ENCODE measurements at regions of chr18 and their contacts with region 1.

Region 1: DNA sequence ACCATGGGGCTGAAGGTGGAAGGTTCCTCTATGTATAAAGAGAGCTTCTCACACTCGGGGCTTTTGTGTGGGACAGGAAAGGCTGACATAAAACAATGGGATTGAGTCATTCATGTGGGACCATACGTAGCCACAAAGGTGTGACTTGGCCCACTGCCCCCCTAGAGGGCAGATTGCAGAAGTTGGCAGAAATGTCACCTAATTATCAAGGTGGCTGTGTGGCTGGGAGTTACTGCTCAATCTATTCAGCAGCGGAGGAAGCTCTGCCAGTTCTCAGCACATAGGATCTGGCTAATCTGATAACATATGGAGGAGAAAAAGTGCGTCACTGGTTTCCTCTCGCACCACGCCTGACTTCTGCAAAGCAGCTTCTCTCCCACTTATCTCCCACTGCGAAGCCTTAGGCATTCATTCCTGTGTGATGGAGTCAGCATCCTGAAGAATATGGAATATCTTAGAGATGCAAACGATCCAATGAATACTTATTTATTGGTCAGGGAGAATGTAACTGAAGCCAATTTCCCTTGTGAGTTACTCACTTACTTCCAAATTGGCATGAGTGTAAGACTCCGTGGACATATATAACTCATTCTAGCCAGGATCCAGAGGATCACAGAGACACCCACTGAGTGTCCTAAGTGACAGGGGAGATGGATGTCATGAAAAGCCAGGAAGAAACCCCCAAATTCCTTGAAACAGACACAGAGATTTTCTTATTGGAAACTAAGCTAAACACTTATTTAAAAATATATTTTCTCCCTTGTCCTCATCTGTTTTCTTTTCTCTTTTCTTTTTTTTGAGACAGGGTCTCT is 344.8 kb downstream of the TGIF1 start:
- DNase-seq: peak in 4 of 5 donors; percentile 26 to 33 (median 31)
- ATAC-seq: peak in 3 of 4 donors; percentile 36 to 92 (median 63)
- H3K4me3 ChIP-seq: no peak overlapping the region
- H3K27ac ChIP-seq: no peak overlapping the region
- H3K4me1 ChIP-seq: peaks cover 0 to 3% (median 0%) of the 10 kb centered on the region in 12 donors
- H3K27me3 ChIP-seq: no peaks in the 10 kb centered on the region
- CTCF ChIP-seq: no peak
- POLR2A ChIP-seq: no peak

Region 2: DNA sequence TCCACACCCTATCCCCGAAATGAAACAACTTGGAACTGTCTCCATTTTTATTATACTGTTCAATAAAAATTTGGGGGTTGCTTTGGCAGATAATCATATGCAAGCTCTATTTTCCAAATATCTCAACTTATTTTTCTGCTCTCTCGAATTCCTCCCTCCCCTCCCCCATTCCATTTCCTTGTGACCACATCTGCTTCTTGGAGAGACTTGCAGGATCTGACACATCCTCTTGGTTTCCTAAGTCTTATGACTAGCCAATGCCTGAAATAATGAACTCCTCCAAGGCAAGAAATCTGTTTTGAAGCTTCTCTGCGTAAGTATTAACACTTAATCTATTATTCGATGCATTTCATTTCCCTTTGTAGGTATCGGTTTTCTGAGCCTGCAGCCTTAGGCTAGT is 328.7 kb before region 1 on chr18:
- intact Hi-C with region 1: no loop called
- DNase-seq: peak in 1 of 5 donors; percentile 35
- ATAC-seq: peak in 3 of 4 donors; percentile 55 to 84 (median 59)
- H3K4me3 ChIP-seq: peak overlapping the region in 3 of 12 donors; percentile 0 to 15 (median 8)
- H3K27ac ChIP-seq: peak overlapping the region in 3 of 12 donors; percentile 19 to 53 (median 35)
- H3K4me1 ChIP-seq: peaks cover 0 to 18% (median 7%) of the 10 kb centered on the region in 12 donors
- H3K27me3 ChIP-seq: no peaks in the 10 kb centered on the region
- CTCF ChIP-seq: no peak
- POLR2A ChIP-seq: no peak

Region 3: GRCh38 chr18:3839481-3840075 is 44.8 kb after region 1 on chr18:
- intact Hi-C with region 1: loop called in 1 of 10 experiments (anchors 5 kb)
- DNase-seq: no peak
- ATAC-seq: no peak
- H3K4me3 ChIP-seq: no peak overlapping the region
- H3K27ac ChIP-seq: no peak overlapping the region
- H3K4me1 ChIP-seq: no peaks in the 10 kb centered on the region
- H3K27me3 ChIP-seq: no peaks in the 10 kb centered on the region
- CTCF ChIP-seq: no peak
- POLR2A ChIP-seq: no peak

Region 4: DNA sequence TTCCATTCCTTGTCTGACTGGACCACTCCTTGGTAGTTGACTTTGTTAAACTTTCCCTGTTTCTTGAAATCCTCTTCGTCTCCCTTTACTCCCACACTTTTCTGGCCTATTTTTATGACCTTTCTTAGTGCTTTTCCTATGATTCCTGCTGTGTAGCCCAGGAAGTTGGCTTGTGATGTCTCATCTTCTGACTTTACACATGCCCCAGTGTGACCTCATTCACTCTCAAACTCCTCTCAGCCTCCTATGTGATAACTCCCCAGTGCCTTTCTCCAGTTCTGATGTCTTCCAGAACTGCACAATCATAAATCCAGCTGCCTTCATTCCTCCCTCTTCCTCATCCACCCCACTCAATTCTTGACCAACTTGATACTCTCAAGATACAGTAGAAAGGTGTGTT is 62.8 kb after region 1 on chr18:
- intact Hi-C with region 1: loop called in 1 of 10 experiments (anchors 10 kb)
- DNase-seq: no peak
- ATAC-seq: no peak
- H3K4me3 ChIP-seq: no peak overlapping the region
- H3K27ac ChIP-seq: no peak overlapping the region
- H3K4me1 ChIP-seq: no peaks in the 10 kb centered on the region
- H3K27me3 ChIP-seq: no peaks in the 10 kb centered on the region
- CTCF ChIP-seq: no peak
- POLR2A ChIP-seq: no peak